ENCODE measurements at regions of chr3 and their contacts with region 1.

Region 1: DNA sequence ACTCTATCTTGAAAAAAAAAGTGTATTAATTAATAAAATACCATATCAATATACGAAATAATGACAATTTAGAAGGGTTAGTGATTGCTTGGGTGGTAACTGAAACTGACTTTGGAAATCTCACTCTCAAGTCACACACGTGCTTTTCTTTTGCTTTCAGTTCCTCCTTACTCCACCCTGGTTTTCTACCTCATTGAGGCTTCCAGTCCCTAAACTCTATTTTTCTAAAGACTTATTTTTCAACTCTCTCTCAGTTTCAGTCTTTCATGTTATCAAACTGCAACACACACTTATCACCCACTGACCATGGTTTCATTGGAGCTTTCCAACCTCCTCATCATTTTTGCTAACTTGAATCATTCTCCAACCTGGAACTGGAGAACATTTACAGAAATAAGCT is 23.5 kb downstream of the IL12A start:
- DNase-seq: no peak
- ATAC-seq: peak; percentile 60
- H3K4me3 ChIP-seq: no peak overlapping the region
- H3K4me3 Mint-ChIP-seq: peak overlapping the region in 1 of 10 donors; percentile 64
- H3K27ac ChIP-seq: no peak overlapping the region
- H3K27ac Mint-ChIP-seq: peak overlapping the region in 1 of 9 donors; percentile 83
- H3K4me1 ChIP-seq: no peaks in the 10 kb centered on the region
- H3K4me1 Mint-ChIP-seq: peaks cover 0 to 42% (median 0%) of the 10 kb centered on the region in 7 donors
- H3K27me3 ChIP-seq: no peaks in the 10 kb centered on the region
- H3K27me3 Mint-ChIP-seq: peaks cover 0 to 5% (median 0%) of the 10 kb centered on the region in 5 donors

Region 2: DNA sequence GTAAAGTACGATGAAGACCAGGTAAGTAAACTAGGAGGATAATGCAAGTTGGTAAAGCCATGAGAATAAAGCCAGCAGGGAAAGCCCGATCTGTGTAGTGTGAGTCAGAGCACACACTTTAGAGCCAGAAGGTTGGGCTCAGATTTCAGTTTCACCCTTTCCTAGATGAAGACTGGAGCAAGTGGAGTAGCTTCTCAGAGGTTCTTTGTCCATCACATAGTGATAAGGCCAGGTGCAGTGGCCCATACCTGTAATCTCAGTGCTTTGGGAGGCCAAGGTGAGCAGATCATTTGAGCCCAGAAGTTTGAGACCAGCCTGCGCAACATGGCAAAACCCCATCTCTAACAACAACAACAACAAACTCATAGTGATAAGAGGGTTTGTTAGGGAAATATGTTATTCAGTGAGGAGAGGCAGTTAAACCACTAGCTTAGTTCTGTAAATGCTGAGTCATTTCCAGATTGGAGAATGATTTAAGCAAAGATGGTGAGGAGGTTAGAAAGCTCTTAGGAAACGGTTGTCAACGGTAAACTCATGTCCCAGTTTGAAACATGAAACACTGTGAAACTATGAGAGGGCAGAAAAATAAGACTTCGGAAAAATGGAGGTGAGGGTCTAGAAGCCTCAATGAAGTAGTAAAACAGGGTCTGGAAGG is 15.6 kb after region 1 on chr3:
- CTCF ChIA-PET with region 1: no interaction called
- POLR2A ChIA-PET with region 1: interaction called, 5 read pairs
- intact Hi-C with region 1: loop called in 1 of 2 experiments (anchors 1 kb)
- DNase-seq: peak in 1 of 9 donors; percentile 36
- ATAC-seq: peak; percentile 22
- H3K4me3 ChIP-seq: no peak overlapping the region
- H3K4me3 Mint-ChIP-seq: peak overlapping the region in 1 of 10 donors; percentile 54
- H3K27ac ChIP-seq: no peak overlapping the region
- H3K27ac Mint-ChIP-seq: peak overlapping the region in 2 of 9 donors; percentile 28 to 88
- H3K4me1 ChIP-seq: no peaks in the 10 kb centered on the region
- H3K4me1 Mint-ChIP-seq: peaks cover 0 to 33% (median 0%) of the 10 kb centered on the region in 7 donors
- H3K27me3 ChIP-seq: no peaks in the 10 kb centered on the region
- H3K27me3 Mint-ChIP-seq: no peaks in the 10 kb centered on the region